ENCODE measurements at regions of chr13 and their contacts with region 1.

Region 1: DNA sequence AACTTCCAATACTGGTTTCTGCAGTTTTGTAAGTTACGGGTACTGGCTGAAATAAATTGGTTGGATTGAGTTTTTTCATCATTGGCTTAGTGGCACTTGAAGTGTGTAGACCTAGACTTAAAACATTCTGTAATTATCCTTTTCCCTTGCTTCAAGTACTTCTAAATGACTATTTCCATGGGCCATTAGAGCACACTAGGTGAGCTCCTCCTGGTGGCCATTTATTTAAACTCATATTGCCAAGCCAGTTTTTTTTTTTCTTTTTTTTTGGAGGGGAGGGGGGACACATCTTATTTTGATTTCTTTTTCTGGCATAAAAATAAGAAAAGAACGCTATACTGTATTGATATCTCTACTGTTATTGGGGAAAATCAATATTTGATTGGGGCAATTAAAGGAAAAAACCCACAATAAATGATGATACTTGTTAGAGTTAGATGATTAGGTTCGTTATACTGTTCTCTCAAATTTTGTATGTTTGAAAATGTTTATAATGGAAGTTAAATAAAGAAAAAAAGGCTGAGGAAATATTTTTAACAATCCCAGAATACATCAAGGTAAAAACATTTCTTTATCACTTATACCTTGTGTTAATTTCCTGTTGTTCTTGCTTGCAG is 82.9 kb downstream of the PDS5B start:
- DNase-seq: peak; percentile 11
- CTCF ChIP-seq: peak; percentile 48

Region 2: DNA sequence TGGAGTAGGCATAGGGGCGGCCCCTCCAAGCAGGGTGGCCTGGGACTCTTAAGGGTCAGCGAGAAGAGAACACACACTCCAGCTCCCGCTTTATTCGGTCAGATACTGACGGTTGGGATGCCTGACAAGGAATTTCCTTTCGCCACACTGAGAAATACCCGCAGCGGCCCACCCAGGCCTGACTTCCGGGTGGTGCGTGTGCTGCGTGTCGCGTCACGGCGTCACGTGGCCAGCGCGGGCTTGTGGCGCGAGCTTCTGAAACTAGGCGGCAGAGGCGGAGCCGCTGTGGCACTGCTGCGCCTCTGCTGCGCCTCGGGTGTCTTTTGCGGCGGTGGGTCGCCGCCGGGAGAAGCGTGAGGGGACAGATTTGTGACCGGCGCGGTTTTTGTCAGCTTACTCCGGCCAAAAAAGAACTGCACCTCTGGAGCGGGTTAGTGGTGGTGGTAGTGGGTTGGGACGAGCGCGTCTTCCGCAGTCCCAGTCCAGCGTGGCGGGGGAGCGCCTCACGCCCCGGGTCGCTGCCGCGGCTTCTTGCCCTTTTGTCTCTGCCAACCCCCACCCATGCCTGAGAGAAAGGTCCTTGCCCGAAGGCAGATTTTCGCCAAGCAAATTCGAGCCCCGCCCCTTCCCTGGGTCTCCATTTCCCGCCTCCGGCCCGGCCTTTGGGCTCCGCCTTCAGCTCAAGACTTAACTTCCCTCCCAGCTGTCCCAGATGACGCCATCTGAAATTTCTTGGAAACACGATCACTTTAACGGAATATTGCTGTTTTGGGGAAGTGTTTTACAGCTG is 353.7 kb before region 1 on chr13 and contains the starts of genes BRCA2 and ZAR1L:
- CTCF ChIA-PET with region 1: no interaction called
- POLR2A ChIA-PET with region 1: no interaction called
- DNase-seq: peak; percentile 89
- CTCF ChIP-seq: no peak

Region 3: GRCh38 chr13:32695602-32696250 is 26.6 kb after region 1 on chr13:
- CTCF ChIA-PET with region 1: interaction called, 12 read pairs
- POLR2A ChIA-PET with region 1: no interaction called
- DNase-seq: no peak
- CTCF ChIP-seq: no peak